ENCODE measurements at regions of chr14 and their contacts with region 1.

Region 1: GRCh38 chr14:73576391-73576790 is 7.4 kb downstream of the ACOT2 start:
- DNase-seq: peak in 1 of 2 experiments; percentile 48
- H3K4me3 ChIP-seq: no peak overlapping the region
- H3K27ac ChIP-seq: no peak overlapping the region
- H3K4me1 ChIP-seq: peaks cover 18% of the 10 kb centered on the region
- H3K27me3 ChIP-seq: no peaks in the 10 kb centered on the region
- CTCF ChIP-seq: no peak

Region 2: GRCh38 chr14:73365727-73366126 is 210.7 kb before region 1 on chr14:
- CTCF ChIA-PET with region 1: no interaction called
- POLR2A ChIA-PET with region 1: no interaction called
- intact Hi-C with region 1: no loop called
- DNase-seq: no peak
- H3K4me3 ChIP-seq: no peak overlapping the region
- H3K27ac ChIP-seq: no peak overlapping the region
- H3K4me1 ChIP-seq: no peaks in the 10 kb centered on the region
- H3K27me3 ChIP-seq: no peaks in the 10 kb centered on the region
- CTCF ChIP-seq: no peak

Region 3: GRCh38 chr14:73591690-73592448 is 15.5 kb after region 1 on chr14 and contains the start of gene ACOT4:
- CTCF ChIA-PET with region 1: no interaction called
- POLR2A ChIA-PET with region 1: interaction called, 10 read pairs
- intact Hi-C with region 1: no loop called
- DNase-seq: peak in 1 of 2 experiments; percentile 63
- H3K4me3 ChIP-seq: peak within 1 kb of the TSS; percentile 54; the same call in 1 of the 2 replicates
- H3K27ac ChIP-seq: no peak within 1 kb of the TSS
- H3K4me1 ChIP-seq: no peaks in the 10 kb centered on the region
- H3K27me3 ChIP-seq: no peaks in the 10 kb centered on the region
- CTCF ChIP-seq: no peak
- total RNA-seq, gene ACOT4: 3.5 and 4.9 TPM in 2 replicates

Region 4: GRCh38 chr14:74207947-74208346 is 631.6 kb after region 1 on chr14:
- CTCF ChIA-PET with region 1: no interaction called
- POLR2A ChIA-PET with region 1: no interaction called
- intact Hi-C with region 1: no loop called
- DNase-seq: no peak
- H3K4me3 ChIP-seq: no peak overlapping the region
- H3K27ac ChIP-seq: no peak overlapping the region
- H3K4me1 ChIP-seq: no peaks in the 10 kb centered on the region
- H3K27me3 ChIP-seq: no peaks in the 10 kb centered on the region
- CTCF ChIP-seq: no peak; the same call in 1 of the 2 replicates

Measured in PC-9 (cell line).